ENCODE measurements at regions of chr11 and their contacts with region 1.

Region 1: DNA sequence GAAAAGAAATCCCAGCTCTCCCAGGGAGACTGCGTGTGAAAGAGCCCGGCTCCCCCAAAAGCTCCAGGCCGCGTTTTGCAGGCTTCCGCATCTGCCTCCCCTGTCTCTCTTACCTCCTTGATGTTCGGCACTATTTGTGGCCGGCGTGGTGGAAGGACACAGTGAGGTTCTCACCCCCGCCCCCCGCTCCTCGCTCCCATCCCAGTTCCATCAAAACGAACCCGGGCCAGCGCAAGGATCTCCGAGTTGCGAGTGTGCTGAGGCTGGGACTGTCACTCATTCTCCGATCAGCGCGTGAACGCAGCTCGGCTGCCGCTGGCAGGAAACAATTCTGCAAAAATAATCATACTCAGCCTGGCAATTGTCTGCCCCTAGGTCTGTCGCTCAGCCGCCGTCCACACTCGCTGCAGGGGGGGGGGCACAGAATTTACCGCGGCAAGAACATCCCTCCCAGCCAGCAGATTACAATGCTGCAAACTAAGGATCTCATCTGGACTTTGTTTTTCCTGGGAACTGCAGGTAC is at the start of gene NCAM1:
- DNase-seq: peak; percentile 23
- ATAC-seq: peak; percentile 32; the same call in 1 of the 2 replicates
- H3K4me3 ChIP-seq: peak within 1 kb of the TSS; percentile 33; the same call in 1 of the 2 replicates
- H3K27ac ChIP-seq: no peak within 1 kb of the TSS
- H3K4me1 ChIP-seq: no peaks in the 10 kb centered on the region; the same call in 1 of the 2 replicates
- H3K27me3 ChIP-seq: peaks cover 32% of the 10 kb centered on the region
- CTCF ChIP-seq: no peak
- POLR2A ChIP-seq: no peak
- RAD21 ChIP-seq: no peak
- total RNA-seq, gene NCAM1: 0.18 TPM in 1 of 2 replicates, not detected in the other

Region 2: DNA sequence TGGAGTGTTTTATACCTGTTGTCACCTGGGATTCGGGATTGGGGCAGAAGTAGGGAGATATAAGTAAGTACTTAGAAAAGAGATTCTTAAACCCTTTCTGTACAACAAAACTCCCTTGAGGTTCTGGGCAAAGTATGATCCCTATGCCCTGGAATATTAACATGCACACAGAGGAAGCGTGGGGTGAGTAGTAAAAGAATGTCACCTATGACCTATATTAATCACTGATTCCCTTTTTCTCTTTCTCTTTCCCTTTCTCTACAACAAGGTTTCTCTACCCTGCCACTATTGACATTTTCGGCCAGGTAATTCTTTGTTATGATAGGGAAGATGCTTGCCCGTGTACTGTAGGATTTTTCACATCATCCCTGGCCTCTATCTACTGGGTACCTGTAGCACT is 490.9 kb before region 1 on chr11:
- CTCF ChIA-PET with region 1: no interaction called
- POLR2A ChIA-PET with region 1: no interaction called
- dilution Hi-C with region 1: no loop called
- in situ Hi-C with region 1: no loop called
- intact Hi-C with region 1: no loop called
- DNase-seq: peak; percentile 4
- ATAC-seq: peak; percentile 46
- H3K4me3 ChIP-seq: no peak overlapping the region
- H3K27ac ChIP-seq: no peak overlapping the region
- H3K4me1 ChIP-seq: no peaks in the 10 kb centered on the region; the same call in 1 of the 2 replicates
- H3K27me3 ChIP-seq: peaks cover 15% of the 10 kb centered on the region
- CTCF ChIP-seq: no peak
- POLR2A ChIP-seq: no peak
- RAD21 ChIP-seq: no peak

Region 3: DNA sequence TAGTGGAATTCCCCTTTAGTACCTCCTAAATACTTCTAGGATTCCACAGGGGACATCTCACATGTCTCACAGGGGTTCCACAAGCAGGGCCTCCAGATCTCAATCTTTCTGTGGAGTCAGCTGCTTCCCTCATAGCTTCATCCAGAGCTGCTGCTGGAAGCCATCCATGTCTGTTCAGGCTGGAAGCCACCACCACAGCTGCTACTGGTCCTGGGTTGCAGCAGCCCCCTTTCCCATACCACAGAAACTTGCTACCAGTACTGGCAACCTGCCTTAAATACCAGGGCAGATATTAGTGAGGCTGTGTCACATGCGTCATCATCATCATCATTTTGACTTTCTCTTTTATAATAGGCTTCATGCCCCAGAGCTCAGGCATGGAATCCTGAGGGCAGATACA is 242.7 kb before region 1 on chr11:
- CTCF ChIA-PET with region 1: interaction called, 11 read pairs
- POLR2A ChIA-PET with region 1: no interaction called
- dilution Hi-C with region 1: no loop called
- in situ Hi-C with region 1: no loop called
- intact Hi-C with region 1: no loop called
- DNase-seq: no peak
- ATAC-seq: no peak
- H3K4me3 ChIP-seq: no peak overlapping the region
- H3K27ac ChIP-seq: no peak overlapping the region
- H3K4me1 ChIP-seq: no peaks in the 10 kb centered on the region
- H3K27me3 ChIP-seq: no peaks in the 10 kb centered on the region
- CTCF ChIP-seq: no peak
- POLR2A ChIP-seq: no peak
- RAD21 ChIP-seq: no peak

Region 4: GRCh38 chr11:112769170-112769569 is 192.0 kb before region 1 on chr11:
- CTCF ChIA-PET with region 1: no interaction called
- POLR2A ChIA-PET with region 1: no interaction called
- dilution Hi-C with region 1: no loop called
- in situ Hi-C with region 1: no loop called
- intact Hi-C with region 1: no loop called
- DNase-seq: no peak
- ATAC-seq: no peak
- H3K4me3 ChIP-seq: no peak overlapping the region
- H3K27ac ChIP-seq: no peak overlapping the region
- H3K4me1 ChIP-seq: no peaks in the 10 kb centered on the region
- H3K27me3 ChIP-seq: no peaks in the 10 kb centered on the region
- CTCF ChIP-seq: no peak
- POLR2A ChIP-seq: no peak
- RAD21 ChIP-seq: no peak